ENCODE measurements at regions of chr15 and their contacts with region 1.

Region 1: DNA sequence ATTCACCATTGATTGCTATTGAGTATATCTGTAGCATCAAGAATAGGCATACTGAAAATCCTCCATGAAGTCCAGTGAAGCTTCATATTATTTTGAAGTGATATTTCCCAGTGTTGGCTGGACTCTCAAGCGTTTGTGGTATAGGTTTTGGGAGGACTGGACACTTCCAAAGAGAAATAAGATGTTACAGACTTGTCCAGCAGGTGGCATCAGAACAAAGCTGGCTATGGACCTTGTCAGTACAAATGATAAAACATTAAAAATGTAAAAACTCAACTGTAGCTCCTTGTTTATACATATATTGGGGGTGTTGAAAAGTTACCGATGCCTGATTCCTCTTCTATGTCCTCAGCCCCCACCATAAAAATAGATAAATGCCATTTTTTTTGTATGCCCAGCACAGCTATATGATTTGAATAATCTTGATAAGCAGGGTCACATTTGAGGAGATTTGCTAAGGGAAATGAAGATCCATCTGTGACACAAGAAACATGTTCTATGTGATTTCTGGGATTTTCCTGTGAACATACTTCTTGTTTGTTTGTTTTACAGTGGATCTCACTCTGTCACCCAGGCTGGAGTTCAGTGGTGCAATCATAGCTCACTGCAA is 54.5 kb upstream of the GOLGA6B start:
- DNase-seq: no peak
- ATAC-seq: no peak
- H3K4me3 ChIP-seq: no peak overlapping the region
- H3K27ac ChIP-seq: no peak overlapping the region
- H3K4me1 ChIP-seq: no peaks in the 10 kb centered on the region
- H3K27me3 ChIP-seq: no peaks in the 10 kb centered on the region

Region 2: GRCh38 chr15:71691458-71692417 is 908.2 kb before region 1 on chr15:
- intact Hi-C with region 1: no loop called
- DNase-seq: peak in 2 of 3 donors; percentile 20 to 53
- ATAC-seq: peak; percentile 86 to 91
- H3K4me3 ChIP-seq: no peak overlapping the region
- H3K27ac ChIP-seq: peak overlapping the region; percentile 92
- H3K4me1 ChIP-seq: peaks cover 2% of the 10 kb centered on the region
- H3K27me3 ChIP-seq: no peaks in the 10 kb centered on the region

Region 3: DNA sequence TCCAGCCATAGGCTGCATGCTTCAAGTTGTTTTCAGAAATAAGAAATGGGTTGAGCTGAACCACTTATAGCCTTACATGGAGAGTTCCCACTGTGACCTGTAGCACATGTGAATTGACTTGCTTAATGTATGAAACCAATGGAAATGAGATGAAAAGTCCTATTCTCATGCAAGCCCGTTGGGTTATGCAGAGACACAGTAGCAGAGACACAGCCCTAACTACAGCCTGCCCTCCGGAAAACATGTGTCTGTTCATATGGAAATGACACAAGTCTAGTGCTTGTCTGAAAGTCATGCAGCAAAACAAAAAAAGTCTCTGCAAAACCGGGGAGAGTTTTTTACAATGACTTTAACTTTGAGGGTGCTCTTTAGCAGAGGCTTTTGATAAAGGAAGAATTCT is 71.6 kb after region 1 on chr15:
- intact Hi-C with region 1: loop called in 2 of 4 experiments (anchors 10 kb)
- DNase-seq: no peak
- ATAC-seq: no peak
- H3K4me3 ChIP-seq: no peak overlapping the region
- H3K27ac ChIP-seq: no peak overlapping the region
- H3K4me1 ChIP-seq: peaks cover 2% of the 10 kb centered on the region
- H3K27me3 ChIP-seq: no peaks in the 10 kb centered on the region

Region 4: GRCh38 chr15:73518180-73518862 is 918.4 kb after region 1 on chr15:
- intact Hi-C with region 1: no loop called
- DNase-seq: peak in 2 of 3 donors; percentile 27 to 43
- ATAC-seq: no peak
- H3K4me3 ChIP-seq: no peak overlapping the region
- H3K27ac ChIP-seq: peak overlapping the region; percentile 97
- H3K4me1 ChIP-seq: no peaks in the 10 kb centered on the region
- H3K27me3 ChIP-seq: no peaks in the 10 kb centered on the region